ENCODE measurements at regions of chr1 and their contacts with region 1.

Region 1: GRCh38 chr1:200464784-200465400 is 55.1 kb upstream of the ZNF281 start:
- DNase-seq: no peak

Region 2: DNA sequence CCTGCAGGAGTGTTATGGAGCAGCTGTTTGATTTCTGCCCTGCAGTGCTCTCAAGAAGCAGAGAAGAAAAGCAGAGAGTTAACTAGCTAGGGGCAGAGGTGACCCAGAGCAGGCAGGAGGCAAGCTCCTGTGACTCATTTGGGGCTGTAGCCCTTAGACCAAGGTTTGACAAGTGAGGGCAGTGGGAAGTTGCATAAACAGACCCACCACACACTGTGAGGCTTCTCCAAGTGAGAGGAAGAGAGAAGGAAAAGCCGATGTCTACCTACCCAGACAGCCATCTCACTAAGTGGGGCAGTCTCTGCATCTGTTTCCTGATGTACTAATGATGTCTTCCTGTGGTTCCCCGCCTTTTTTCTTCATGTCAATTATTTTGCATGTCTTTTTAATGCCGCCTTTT is 597.3 kb before region 1 on chr1:
- intact Hi-C with region 1: no loop called
- DNase-seq: no peak

Region 3: GRCh38 chr1:200510228-200510623 is 45.3 kb after region 1 on chr1:
- intact Hi-C with region 1: no loop called
- DNase-seq: no peak

Region 4: GRCh38 chr1:200861937-200862647 is 397.2 kb after region 1 on chr1:
- intact Hi-C with region 1: loop called in 1 of 2 experiments (anchors 5 kb)
- DNase-seq: no peak